ENCODE measurements at regions of chr5 and their contacts with region 1.

Region 1: DNA sequence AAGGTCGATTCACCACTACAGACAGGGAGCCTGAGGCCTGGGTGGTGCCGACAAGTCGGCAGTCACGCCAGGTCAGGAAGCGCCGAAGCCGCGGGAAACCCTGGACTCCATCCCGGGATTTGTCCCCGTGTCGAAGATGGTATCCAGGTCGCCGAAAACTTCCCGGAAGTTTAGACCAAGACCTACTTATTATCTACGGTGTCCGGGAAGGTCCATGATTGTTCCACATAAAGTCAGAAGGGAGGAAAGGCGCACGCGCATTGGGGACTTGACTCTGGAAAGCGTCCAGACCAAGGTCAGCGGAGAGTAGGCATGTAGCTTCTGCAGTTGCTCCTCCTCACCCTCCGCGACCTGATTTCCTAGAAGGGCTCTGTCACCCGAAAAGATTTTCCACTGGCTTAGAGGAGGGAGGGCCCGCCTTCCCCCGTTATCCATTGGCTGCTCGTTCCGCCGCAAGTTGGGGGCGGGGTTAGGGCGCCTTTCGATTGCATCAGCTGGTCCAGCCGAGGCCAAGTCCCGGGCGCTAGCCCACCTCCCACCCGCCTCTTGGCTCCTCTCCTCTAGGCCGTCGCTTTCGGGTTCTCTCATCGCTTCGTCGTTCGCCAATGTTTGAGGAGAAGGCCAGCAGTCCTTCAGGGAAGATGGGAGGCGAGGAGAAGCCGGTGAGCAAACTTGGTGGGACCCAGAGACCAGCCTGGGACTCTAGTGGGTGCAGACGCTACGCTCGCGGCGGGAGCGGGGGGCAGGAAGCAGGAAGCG is at the start of gene TARS1:
- DNase-seq: peak; percentile 94
- H3K4me3 Mint-ChIP-seq: no peak within 1 kb of the TSS
- H3K27ac Mint-ChIP-seq: no peak within 1 kb of the TSS
- H3K4me1 Mint-ChIP-seq: peaks cover 30% of the 10 kb centered on the region
- H3K27me3 Mint-ChIP-seq: no peaks in the 10 kb centered on the region
- total RNA-seq, gene TARS1: 186 and 187 TPM in 2 replicates

Region 2: GRCh38 chr5:33588654-33589372 is 148.2 kb after region 1 on chr5:
- intact Hi-C with region 1: loop called (anchors 5 kb)
- DNase-seq: peak; percentile 25
- H3K4me3 Mint-ChIP-seq: no peak overlapping the region
- H3K27ac Mint-ChIP-seq: no peak overlapping the region
- H3K4me1 Mint-ChIP-seq: no peaks in the 10 kb centered on the region
- H3K27me3 Mint-ChIP-seq: no peaks in the 10 kb centered on the region

Region 3: DNA sequence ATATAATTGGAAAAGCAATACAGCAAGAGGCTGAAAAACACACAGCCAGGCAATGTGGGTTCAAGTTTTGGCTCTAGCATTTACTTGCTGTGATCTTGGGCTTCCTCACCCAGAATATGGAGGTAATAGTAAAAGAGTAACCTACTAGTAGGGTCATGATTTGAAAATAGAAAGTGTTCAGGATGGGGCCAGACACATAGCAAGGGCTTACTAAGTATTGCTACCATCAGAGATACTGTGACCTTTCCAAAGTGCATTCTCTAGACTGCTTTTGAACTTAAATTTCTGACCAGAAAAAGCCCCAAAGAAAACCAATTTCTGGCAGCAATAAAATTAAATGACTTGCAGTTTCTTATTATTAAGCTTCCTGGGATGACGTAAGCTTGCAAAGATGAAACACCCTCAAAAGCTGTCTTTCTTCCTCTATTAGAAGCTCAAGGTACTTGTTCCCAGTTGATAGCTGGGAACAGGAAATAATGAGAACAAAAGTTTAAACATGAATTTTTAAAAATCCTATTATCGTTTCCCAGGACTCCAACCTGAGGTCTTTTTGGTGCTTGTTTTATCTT is 523.6 kb after region 1 on chr5:
- intact Hi-C with region 1: loop called (anchors 1 kb)
- DNase-seq: no peak
- H3K4me3 Mint-ChIP-seq: peak overlapping the region; percentile 4
- H3K27ac Mint-ChIP-seq: no peak overlapping the region
- H3K4me1 Mint-ChIP-seq: peaks cover 34% of the 10 kb centered on the region
- H3K27me3 Mint-ChIP-seq: peaks cover 18% of the 10 kb centered on the region

Region 4: DNA sequence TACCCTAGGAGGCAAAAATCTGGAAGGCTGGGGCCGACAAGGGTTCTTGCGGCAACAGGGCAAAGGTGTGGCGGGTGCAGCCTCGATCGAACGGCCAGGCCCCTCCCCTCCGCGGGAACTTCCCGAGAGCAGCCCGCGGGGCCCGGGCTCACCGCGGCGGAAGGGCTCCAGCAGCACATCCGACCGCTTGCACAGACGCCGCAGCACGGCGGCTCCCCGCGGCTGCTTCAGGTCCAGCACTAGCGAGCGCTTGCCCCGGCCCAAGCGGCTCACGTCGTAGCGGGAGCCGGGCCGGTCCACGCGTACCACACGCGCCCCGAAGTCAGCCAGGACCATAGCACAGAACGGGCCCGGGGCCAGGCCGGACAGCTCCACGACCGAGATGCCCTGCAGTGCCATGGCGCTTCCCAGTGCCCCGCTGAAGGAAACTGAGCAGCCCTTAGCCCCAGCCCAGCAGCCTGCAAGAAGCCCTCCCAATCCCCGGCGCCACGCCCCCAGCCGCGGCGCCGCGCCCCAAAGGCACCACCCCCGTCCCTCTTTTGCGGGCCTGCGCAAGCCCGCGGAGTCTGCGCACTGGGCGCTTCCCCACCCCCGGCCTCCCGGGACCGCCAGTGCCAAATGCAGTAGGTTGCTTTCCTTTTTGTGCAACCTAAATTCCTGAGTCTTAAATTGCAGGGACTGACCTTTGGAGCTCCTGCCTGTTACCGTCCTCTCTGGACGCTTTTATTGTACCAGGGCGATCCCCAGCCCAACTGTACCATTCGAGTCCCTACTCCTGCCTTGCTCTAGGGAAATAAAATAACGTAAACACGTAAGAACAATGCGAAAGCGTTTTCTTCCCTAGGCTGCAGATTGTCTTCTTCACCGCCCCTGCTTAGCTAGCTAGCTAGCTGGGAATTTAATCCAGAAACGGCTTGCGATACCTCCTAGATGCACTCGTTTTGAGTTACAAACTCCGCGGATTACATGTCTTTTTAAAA is 567.2 kb after region 1 on chr5 and contains the start of gene AMACR:
- intact Hi-C with region 1: loop called (anchors 2 kb)
- DNase-seq: peak; percentile 85
- H3K4me3 Mint-ChIP-seq: peak within 1 kb of the TSS; percentile 86
- H3K27ac Mint-ChIP-seq: peak within 1 kb of the TSS; percentile 86
- H3K4me1 Mint-ChIP-seq: peaks cover 29% of the 10 kb centered on the region
- H3K27me3 Mint-ChIP-seq: no peaks in the 10 kb centered on the region
- total RNA-seq, gene AMACR: 8.3 and 9.0 TPM in 2 replicates

Region 5: GRCh38 chr5:34915139-34915855 is 1474.6 kb after region 1 on chr5 and contains the starts of genes BRIX1 and RAD1:
- intact Hi-C with region 1: loop called (anchors 10 kb)
- DNase-seq: peak; percentile 95
- H3K4me3 Mint-ChIP-seq: peak within 1 kb of the TSS; percentile 78
- H3K27ac Mint-ChIP-seq: peak within 1 kb of the TSS; percentile 56
- H3K4me1 Mint-ChIP-seq: peaks cover 18% of the 10 kb centered on the region
- H3K27me3 Mint-ChIP-seq: no peaks in the 10 kb centered on the region
- total RNA-seq, gene BRIX1: 86.2 and 91.8 TPM in 2 replicates
- total RNA-seq, gene RAD1: 37.6 and 42.3 TPM in 2 replicates